WTC11 (cell line): ENCODE measurements at regions of chr10 and their contacts with region 1.

Region 1: GRCh38 chr10:62050893-62051433 is 149.5 kb downstream of the ARID5B start:
- DNase-seq: no peak
- ATAC-seq: peak; percentile 8; the same call in 1 of the 2 replicates
- H3K4me3 Mint-ChIP-seq: no peak overlapping the region
- H3K27ac Mint-ChIP-seq: no peak overlapping the region; the same call in 1 of the 2 replicates
- H3K4me1 Mint-ChIP-seq: peaks cover 58% of the 10 kb centered on the region
- H3K27me3 Mint-ChIP-seq: no peaks in the 10 kb centered on the region; the same call in 1 of the 2 replicates
- CTCF ChIP-seq: no peak

Region 2: DNA sequence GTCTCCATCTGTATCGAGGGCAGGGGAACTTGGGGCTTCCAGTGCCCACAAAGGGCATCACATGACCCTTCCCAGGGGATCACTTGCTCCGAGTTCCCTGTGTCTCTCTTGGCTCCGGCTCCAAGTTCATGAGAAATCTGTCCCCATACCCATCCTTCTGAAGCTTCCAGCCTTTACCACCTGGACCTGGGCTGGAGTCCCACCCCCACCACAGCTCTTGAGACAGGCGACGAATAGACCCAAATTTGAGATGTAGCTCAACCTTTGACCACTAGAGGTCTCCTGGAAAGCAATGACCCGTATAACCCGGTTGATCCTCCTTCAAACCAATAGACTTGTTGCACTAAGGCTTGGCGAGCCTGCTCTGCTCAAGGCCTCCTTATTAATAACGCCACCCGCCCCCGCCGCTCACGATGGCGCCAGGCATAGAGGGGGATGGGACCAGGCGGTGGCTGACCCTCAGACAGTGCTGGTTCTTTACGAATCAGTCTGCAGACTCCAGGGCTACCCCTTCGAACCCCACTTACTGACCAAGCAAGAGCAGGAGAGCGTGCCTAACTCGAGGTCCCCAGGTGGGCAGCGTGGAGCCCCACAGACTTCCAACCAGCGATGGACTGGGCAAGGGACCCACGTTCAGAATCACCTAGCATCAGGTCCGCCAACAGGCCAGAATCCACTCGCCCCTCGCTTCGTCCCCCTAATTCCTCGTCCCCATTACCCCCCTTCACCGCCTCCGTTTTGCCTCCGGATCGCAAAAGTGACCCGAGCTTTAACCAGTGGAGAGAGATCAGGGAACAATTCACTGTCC is 153.9 kb before region 1 on chr10:
- CTCF ChIA-PET with region 1: interaction called, 15 read pairs
- POLR2A ChIA-PET with region 1: no interaction called
- DNase-seq: peak; percentile 58
- ATAC-seq: peak; percentile 92
- H3K4me3 Mint-ChIP-seq: peak overlapping the region; percentile 85
- H3K27ac Mint-ChIP-seq: no peak overlapping the region
- H3K4me1 Mint-ChIP-seq: peaks cover 31% of the 10 kb centered on the region
- H3K27me3 Mint-ChIP-seq: peaks cover 41% of the 10 kb centered on the region
- CTCF ChIP-seq: peak; percentile 58

Region 3: DNA sequence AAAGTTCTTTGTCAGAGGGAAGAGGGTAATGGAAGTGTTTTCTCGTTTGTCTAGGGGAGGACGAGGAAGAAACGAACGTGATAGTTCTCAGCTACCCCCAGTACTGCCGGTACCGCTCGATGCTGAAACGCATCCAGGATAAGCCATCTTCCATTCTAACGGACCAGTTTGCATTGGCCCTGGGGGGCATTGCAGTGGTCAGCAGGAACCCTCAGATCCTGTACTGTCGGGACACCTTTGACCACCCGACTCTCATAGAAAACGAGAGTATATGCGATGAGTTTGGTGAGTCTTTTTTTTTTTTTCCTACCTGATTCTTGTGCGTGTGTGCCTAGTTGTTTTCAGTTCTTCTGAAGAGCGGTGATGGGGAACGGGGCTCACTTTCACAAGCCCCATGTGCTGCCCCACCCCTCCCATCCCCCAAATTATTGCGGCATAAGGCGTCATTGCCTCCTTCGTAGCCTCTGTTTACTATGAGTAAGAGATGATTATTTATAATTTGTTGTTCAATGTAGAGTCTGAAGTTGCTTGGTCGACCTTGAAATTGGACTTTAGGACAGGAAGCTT is 50.8 kb before region 1 on chr10:
- CTCF ChIA-PET with region 1: no interaction called
- POLR2A ChIA-PET with region 1: no interaction called
- DNase-seq: no peak
- ATAC-seq: no peak
- H3K4me3 Mint-ChIP-seq: no peak overlapping the region
- H3K27ac Mint-ChIP-seq: no peak overlapping the region
- H3K4me1 Mint-ChIP-seq: peaks cover 10% of the 10 kb centered on the region
- H3K27me3 Mint-ChIP-seq: no peaks in the 10 kb centered on the region
- CTCF ChIP-seq: no peak